Left cardiac atrium (tissue), 4 donors: ENCODE measurements at regions of chr15 and their contacts with region 1.

Region 1: GRCh38 chr15:89358755-89359439 is 24.3 kb upstream of the POLG start:
- DNase-seq: peak; percentile 72
- ATAC-seq: peak; percentile 88 to 89

Region 2: GRCh38 chr15:89307046-89307587 is 51.8 kb before region 1 on chr15:
- intact Hi-C with region 1: no loop called
- DNase-seq: no peak
- ATAC-seq: no peak

Region 3: GRCh38 chr15:89399238-89400120 is 40.6 kb after region 1 on chr15:
- intact Hi-C with region 1: no loop called
- DNase-seq: no peak
- ATAC-seq: peak; percentile 29 to 51

Region 4: DNA sequence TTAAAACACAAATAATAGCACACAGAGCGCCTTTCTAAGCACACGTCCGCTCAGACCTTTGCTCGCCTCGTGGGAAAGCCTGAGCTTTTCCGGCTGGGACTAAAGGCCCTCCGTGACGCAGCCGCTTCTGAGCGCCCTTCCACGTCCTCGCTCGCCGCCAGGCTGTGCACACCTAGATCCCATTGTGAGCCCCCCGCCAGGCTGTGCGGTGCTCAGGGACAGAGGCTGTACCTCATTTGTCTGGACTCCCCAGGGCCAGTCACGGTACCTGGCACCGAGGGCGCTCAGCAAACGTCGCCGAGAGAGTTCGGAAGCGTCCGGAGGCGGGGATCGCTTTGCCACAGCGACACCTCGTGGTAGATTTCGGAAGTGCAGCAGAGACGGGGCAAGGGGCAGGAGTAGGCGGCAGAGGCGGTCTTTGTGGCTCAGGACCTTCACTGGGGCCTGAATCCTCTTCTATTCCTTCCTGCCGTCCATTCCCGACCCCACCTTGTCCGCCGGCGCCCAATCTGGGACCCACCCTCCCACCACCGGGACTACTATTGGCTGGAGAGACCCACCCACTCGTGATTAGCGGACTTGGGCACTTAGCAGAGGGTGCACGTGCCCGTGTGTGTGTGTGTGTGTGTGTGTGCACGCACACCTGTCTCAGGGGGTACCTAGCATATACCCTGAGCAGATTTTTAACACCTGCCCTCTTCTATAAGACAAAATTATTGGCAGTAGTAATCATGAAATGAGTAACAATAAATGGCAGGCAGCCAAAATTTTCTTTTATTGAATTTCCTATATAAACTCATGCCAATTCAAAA is 71.8 kb after region 1 on chr15:
- intact Hi-C with region 1: loop called (anchors 1 to 2 kb)
- DNase-seq: peak; percentile 85
- ATAC-seq: peak; percentile 94 to 96

Region 5: DNA sequence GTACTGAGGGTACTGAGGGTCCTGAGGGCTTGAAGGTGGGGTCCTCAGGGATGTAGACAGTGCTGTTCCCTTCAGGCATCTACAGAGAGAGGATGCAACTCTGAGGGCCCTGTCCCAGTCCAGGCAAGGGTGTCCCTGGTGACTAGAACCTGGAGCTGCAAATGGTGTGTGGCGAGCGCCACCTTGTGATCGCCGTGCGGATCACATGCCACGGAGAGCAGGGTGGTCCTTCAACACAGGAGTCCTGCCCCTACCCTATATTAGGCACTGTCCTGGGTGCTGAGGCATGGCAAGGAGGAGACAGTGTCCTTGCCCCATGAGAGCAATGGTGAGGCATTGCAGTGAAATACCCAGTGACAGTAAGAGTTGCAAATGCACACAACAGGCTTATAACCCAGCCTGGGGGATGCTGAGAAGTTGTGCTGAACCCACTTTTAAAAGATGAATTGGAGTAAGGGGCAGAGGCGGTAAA is 113.9 kb after region 1 on chr15:
- intact Hi-C with region 1: loop called (anchors 2 to 5 kb)
- DNase-seq: no peak
- ATAC-seq: peak; percentile 23 to 64

Region 6: GRCh38 chr15:89556413-89557262 is 197.7 kb after region 1 on chr15:
- intact Hi-C with region 1: loop called in 1 of 2 experiments (anchors 5 kb)
- DNase-seq: peak; percentile 31
- ATAC-seq: peak in 1 of 2 donors; percentile 53